ENCODE measurements at regions of chr11 and their contacts with region 1.

Region 1: DNA sequence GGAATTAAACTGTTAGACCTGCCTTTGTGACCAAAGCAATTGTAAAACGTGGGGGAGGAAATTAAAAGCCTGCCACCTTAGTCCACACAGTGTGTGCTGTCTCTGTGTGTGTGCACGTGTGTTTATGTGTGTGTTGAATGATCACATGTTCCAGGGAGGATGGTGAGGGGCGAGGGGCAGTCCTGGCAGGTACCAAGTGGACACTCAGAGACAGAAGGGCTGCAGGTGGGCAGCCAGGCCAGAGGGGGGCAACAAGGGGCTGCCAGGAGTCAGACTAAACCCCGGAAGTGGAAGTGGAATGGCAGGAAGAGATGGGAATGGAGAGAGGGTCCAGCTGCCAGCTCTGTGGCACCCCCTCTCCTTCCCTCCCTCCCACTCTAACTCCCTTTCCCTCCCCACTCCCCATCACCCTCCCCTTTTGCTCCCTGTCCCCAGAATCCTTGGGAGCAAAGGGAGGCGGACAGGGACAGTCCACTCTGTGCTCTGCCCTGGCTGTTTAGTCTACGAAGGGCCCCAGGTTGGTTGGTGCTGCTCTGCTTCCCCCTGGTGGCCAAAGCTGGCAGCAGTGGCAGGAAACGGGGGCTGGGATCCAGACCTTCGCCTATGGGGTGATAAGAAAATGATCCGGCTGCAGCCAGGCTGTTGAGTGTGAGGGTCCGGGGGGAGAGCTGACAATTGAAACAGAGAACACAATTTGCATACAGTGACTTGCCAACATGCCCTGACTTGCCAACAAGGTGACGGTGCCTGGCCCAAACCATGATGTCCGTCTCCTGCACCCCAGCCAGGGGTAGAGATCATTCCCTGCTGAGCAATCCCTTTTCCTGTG is 24.4 kb downstream of the P2RY2 start:
- DNase-seq: peak; percentile 87
- ATAC-seq: peak; percentile 91
- H3K4me3 Mint-ChIP-seq: peak overlapping the region; percentile 51
- H3K27ac Mint-ChIP-seq: no peak overlapping the region; the same call in 1 of the 2 replicates
- H3K4me1 Mint-ChIP-seq: peaks cover 36% of the 10 kb centered on the region
- H3K27me3 Mint-ChIP-seq: no peaks in the 10 kb centered on the region; the same call in 1 of the 2 replicates
- CTCF ChIP-seq: peak; percentile 67

Region 2: GRCh38 chr11:73257342-73258103 is 15.1 kb after region 1 on chr11:
- CTCF ChIA-PET with region 1: interaction called, 15 read pairs
- POLR2A ChIA-PET with region 1: no interaction called
- DNase-seq: no peak
- ATAC-seq: peak; percentile 48; the same call in 1 of the 2 replicates
- H3K4me3 Mint-ChIP-seq: no peak overlapping the region
- H3K27ac Mint-ChIP-seq: no peak overlapping the region
- H3K4me1 Mint-ChIP-seq: peaks cover 6% of the 10 kb centered on the region; the same call in 1 of the 2 replicates
- H3K27me3 Mint-ChIP-seq: peaks cover 3% of the 10 kb centered on the region
- CTCF ChIP-seq: no peak